Activated naive CD4-positive, alpha-beta T cell treated with anti-CD3 and anti-CD28 coated beads for 36 hours (primary cell): ENCODE measurements at regions of chr6 and their contacts with region 1.

Region 1: DNA sequence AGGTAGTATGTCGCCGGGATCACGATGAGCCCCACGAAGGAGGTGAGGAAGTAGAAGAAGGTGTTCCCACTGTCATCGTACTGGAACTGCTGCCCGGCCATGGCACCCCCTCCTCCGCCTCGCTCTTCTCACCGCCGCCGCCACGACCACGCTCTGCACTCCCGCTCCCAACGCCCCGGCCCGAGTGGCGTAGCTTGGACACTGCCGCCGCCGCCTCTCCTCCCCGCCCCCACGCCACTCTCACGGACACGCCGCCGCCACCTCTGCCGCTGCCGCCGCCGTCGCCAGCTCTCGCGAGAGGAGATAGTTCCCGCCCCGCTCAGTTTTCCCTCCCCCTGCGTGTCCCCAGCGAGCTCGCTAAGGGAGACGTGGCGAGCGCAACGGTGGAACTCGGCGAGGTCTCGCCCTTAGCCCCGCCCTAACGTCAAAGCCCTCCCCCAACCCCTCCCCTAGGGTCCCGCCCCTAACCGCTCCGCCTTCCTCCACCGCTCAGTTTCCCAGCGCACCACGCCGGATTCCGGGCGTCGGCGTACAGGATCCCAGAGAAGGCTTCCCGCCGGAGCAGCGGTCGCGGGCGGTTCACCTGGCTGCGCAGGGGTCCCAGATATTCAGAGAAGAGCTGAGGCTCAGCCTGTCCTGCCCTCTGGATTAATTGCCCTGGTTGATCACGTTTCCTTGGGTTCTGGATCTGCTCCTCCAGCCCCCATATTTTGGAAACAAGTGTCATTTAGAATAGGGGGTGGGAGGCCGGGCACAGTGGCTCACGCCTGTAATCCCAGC is at the start of gene SEC63:
- DNase-seq: peak; percentile 98
- H3K4me3 Mint-ChIP-seq: peak within 1 kb of the TSS; percentile 97
- H3K27ac Mint-ChIP-seq: peak within 1 kb of the TSS; percentile 94
- H3K4me1 Mint-ChIP-seq: peaks cover 32% of the 10 kb centered on the region
- H3K27me3 Mint-ChIP-seq: no peaks in the 10 kb centered on the region
- total RNA-seq, gene SEC63: 78.3 to 86.5 TPM

Region 2: DNA sequence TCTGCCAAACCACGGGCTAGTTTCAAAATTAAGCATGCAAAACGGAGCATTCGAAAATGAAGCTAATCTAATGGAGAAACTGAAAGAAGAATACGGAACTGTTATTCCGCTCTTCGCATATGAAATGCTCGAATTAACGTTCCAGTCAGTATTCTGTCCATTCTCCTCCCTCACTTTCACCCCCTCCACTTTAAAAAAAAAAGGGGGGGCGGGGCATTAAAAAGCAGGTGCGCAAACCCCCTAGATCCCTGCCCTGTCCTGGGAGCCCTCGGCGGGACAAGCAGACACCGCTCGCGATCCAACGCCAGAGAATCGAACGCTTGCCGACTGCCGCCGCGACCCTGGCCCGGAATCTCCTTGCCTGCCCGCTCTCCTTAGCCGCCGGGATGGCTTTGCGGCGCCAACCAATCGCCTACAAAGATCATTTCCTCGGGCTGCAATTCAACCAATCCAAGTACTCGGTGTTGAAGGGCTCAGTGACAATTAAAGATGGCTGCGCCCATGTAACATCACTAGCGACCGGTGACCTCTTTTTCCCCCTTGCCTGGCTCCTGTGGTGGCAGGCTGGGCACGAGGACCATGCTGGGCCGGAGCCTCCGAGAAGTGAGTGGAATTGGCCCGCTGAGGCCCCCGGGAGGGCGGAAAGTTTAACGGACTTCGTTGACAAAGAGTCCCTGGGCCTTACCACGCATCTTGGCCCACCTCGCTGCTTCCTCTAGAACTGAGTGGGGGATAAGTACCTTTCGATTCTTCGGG is 1328.8 kb before region 1 on chr6 and contains the starts of genes QRSL1 and RTN4IP1:
- CTCF ChIA-PET with region 1: no interaction called
- intact Hi-C with region 1: loop called (anchors 5 kb)
- DNase-seq: peak; percentile 92
- H3K4me3 Mint-ChIP-seq: peak within 1 kb of the TSS; percentile 98
- H3K27ac Mint-ChIP-seq: peak within 1 kb of the TSS; percentile 98
- H3K4me1 Mint-ChIP-seq: peaks cover 32% of the 10 kb centered on the region
- H3K27me3 Mint-ChIP-seq: no peaks in the 10 kb centered on the region
- total RNA-seq, gene QRSL1: 19.6 to 21.6 TPM
- total RNA-seq, gene RTN4IP1: 5.5 to 6.0 TPM

Region 3: GRCh38 chr6:107674995-107675738 is 282.9 kb before region 1 on chr6:
- CTCF ChIA-PET with region 1: no interaction called
- intact Hi-C with region 1: no loop called
- DNase-seq: peak; percentile 94
- H3K4me3 Mint-ChIP-seq: peak overlapping the region; percentile 55
- H3K27ac Mint-ChIP-seq: peak overlapping the region; percentile 72
- H3K4me1 Mint-ChIP-seq: peaks cover 6% of the 10 kb centered on the region
- H3K27me3 Mint-ChIP-seq: no peaks in the 10 kb centered on the region

Region 4: GRCh38 chr6:107800564-107801164 is 157.4 kb before region 1 on chr6:
- CTCF ChIA-PET with region 1: no interaction called
- intact Hi-C with region 1: loop called (anchors 5 kb)
- DNase-seq: no peak
- H3K4me3 Mint-ChIP-seq: no peak overlapping the region
- H3K27ac Mint-ChIP-seq: peak overlapping the region; percentile 1
- H3K4me1 Mint-ChIP-seq: peaks cover 66% of the 10 kb centered on the region
- H3K27me3 Mint-ChIP-seq: no peaks in the 10 kb centered on the region

Region 5: GRCh38 chr6:107943626-107944439 is 14.3 kb before region 1 on chr6:
- CTCF ChIA-PET with region 1: interaction called, 5 read pairs
- intact Hi-C with region 1: loop called (anchors 1 kb)
- DNase-seq: no peak
- H3K4me3 Mint-ChIP-seq: no peak overlapping the region
- H3K27ac Mint-ChIP-seq: no peak overlapping the region
- H3K4me1 Mint-ChIP-seq: peaks cover 48% of the 10 kb centered on the region
- H3K27me3 Mint-ChIP-seq: no peaks in the 10 kb centered on the region

Region 6: GRCh38 chr6:108294727-108295625 is 336.9 kb after region 1 on chr6 and contains the start of gene AFG1L:
- CTCF ChIA-PET with region 1: no interaction called
- intact Hi-C with region 1: loop called (anchors 1 kb)
- DNase-seq: peak; percentile 91
- H3K4me3 Mint-ChIP-seq: peak within 1 kb of the TSS; percentile 99
- H3K27ac Mint-ChIP-seq: peak within 1 kb of the TSS; percentile 100
- H3K4me1 Mint-ChIP-seq: peaks cover 19% of the 10 kb centered on the region
- H3K27me3 Mint-ChIP-seq: no peaks in the 10 kb centered on the region
- total RNA-seq, gene AFG1L: 5.4 to 5.9 TPM